ENCODE measurements at regions of chr12 and their contacts with region 1.

Region 1: GRCh38 chr12:93778306-93778705 is 101.1 kb downstream of the CRADD start:
- DNase-seq: peak in 1 of 2 donors; percentile 84
- H3K4me3 ChIP-seq: peak overlapping the region in 1 of 2 donors; percentile 15
- H3K27ac ChIP-seq: peak overlapping the region; percentile 91 to 92
- H3K4me1 ChIP-seq: peaks cover 17 to 32% of the 10 kb centered on the region in 2 donors
- H3K27me3 ChIP-seq: no peaks in the 10 kb centered on the region
- CTCF ChIP-seq: no peak

Region 2: DNA sequence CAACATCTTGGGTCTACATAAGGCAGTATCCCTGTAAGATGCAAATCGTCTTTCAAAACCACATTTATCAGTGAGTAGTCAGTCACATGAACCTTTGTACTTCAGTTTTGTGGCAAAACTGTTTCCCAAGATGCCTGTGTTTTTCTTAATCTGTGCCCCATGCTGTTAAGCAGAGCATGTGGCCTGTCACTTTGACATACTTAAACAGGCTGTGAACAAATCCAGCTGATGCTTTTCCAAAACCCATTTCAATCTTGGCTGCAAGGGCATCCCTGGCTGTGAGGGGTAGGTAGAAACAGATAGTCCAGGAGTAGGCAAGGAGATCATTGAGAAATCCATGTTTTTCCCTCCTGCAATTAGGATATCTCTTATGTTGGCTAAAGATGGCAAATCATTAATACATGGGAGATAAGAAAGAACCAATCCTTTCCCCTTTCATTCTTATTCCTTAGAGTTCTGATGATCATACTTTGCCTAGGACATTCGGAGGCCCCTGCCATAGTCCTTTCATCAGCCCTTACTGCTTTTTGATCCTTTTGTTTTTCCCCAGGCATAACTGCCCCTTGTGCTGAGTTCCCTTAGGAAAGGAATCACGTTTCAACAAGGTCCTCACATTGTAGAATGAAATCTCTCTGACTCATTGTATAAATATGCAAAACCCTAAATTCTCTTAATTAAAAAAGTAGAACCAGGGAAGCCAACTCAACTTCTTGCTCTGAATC is 728.1 kb before region 1 on chr12:
- intact Hi-C with region 1: no loop called
- DNase-seq: no peak
- H3K4me3 ChIP-seq: no peak overlapping the region
- H3K27ac ChIP-seq: peak overlapping the region in 1 of 2 donors; percentile 13
- H3K4me1 ChIP-seq: peaks cover 0 to 7% of the 10 kb centered on the region in 2 donors
- H3K27me3 ChIP-seq: no peaks in the 10 kb centered on the region
- CTCF ChIP-seq: no peak

Region 3: GRCh38 chr12:93894391-93895088 is 116.2 kb after region 1 on chr12:
- intact Hi-C with region 1: loop called (anchors 5 kb)
- DNase-seq: peak; percentile 57 to 94
- H3K4me3 ChIP-seq: peak overlapping the region in 1 of 2 donors; percentile 2
- H3K27ac ChIP-seq: peak overlapping the region; percentile 73 to 75
- H3K4me1 ChIP-seq: peaks cover 4 to 17% of the 10 kb centered on the region in 2 donors
- H3K27me3 ChIP-seq: no peaks in the 10 kb centered on the region
- CTCF ChIP-seq: no peak

Measured in ascending aorta (tissue), 2 donors.